GM12878 (cell line): ENCODE measurements at regions of chr15 and their contacts with region 1.

Region 1: DNA sequence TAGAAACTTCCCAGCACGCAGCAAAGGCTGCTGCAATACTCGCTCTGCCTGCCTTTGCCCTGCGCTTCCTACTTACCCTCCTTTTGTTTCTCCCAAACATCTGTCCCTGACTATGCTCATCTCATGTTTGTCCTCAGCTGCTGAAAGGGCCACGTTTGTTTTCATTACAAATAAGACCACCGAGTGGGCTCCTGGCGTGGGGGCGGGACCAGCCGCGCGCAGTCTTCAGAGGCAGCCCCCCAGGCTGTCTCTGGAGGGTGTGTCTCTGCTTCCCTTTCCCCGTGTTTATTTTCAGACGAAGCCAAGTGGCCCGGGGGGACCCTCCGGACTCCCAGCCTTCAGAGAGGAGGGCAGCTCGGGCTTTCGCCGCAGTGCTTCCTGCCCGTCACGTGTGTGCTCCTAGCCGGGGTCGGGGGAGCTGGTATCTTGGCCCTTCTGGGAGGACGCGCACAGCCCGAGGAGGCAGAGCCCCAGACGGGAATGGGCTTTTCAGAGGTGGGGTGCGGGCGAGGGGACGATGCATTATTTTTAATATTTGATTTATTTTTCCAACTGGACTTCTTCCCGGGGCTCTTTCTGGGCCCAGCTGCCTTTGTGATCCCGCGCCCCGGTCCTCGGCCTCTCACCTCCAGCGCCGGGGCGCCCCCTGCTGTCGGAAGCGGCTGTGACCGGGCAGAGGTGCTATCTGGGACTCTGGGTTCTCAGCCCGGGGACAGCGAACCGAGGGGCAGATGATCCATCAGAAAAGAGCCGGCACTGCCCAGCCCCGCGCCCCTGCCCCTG is 70.0 kb upstream of the CGNL1 start:
- DNase-seq: no peak
- ATAC-seq: peak; percentile 85
- H3K4me3 ChIP-seq: peak overlapping the region; percentile 79
- H3K27ac ChIP-seq: peak overlapping the region; percentile 52
- H3K4me1 ChIP-seq: peaks cover 14% of the 10 kb centered on the region
- H3K27me3 ChIP-seq: no peaks in the 10 kb centered on the region
- CTCF ChIP-seq: peak; percentile 80 to 91 (median 89); a peak in 5 of 6 replicates
- EP300 ChIP-seq: no peak
- POLR2A ChIP-seq: no peak
- RAD21 ChIP-seq: peak; percentile 96

Region 2: DNA sequence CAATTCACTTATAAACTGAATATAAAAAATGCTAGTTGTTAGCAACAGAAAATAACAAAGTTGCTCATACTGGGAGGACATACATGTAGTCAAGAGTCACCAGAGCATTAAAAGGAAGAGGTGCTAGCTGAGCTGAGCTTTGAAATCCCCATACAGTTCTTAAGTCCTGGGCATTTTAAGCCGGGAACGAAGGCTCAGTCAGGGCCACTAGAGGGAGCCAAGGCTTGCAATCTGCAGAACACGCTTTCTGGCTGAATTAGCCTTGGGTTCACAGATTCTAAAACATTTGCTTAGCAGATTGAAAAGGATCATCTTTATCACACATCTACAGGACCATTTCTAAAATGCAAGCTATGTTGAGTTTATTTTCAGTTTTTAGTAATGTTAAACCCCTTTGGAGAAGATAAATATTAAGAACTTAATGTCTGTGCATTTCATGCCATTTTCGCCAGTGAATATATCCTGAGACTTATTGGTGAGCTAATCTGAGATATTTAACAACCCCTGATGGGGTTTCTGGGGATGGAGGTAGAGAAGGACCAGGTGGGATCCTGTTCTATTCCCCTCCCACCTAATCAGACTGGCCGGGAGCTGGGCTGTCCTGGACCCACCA is 815.1 kb before region 1 on chr15:
- CTCF ChIA-PET with region 1: interaction called, 5 read pairs
- POLR2A ChIA-PET with region 1: no interaction called
- RAD21 ChIA-PET with region 1: interaction called, 4 read pairs
- SMC1A ChIA-PET with region 1: no interaction called
- in situ Hi-C with region 1: loop called (anchors 5 kb)
- intact Hi-C with region 1: loop called (anchors 2 kb)
- DNase-seq: peak; percentile 28
- ATAC-seq: peak; percentile 94
- H3K4me3 ChIP-seq: no peak overlapping the region
- H3K27ac ChIP-seq: no peak overlapping the region
- H3K4me1 ChIP-seq: no peaks in the 10 kb centered on the region
- H3K27me3 ChIP-seq: no peaks in the 10 kb centered on the region
- CTCF ChIP-seq: peak; percentile 89 to 94 (median 92)
- EP300 ChIP-seq: no peak
- POLR2A ChIP-seq: no peak
- RAD21 ChIP-seq: peak; percentile 86

Region 3: DNA sequence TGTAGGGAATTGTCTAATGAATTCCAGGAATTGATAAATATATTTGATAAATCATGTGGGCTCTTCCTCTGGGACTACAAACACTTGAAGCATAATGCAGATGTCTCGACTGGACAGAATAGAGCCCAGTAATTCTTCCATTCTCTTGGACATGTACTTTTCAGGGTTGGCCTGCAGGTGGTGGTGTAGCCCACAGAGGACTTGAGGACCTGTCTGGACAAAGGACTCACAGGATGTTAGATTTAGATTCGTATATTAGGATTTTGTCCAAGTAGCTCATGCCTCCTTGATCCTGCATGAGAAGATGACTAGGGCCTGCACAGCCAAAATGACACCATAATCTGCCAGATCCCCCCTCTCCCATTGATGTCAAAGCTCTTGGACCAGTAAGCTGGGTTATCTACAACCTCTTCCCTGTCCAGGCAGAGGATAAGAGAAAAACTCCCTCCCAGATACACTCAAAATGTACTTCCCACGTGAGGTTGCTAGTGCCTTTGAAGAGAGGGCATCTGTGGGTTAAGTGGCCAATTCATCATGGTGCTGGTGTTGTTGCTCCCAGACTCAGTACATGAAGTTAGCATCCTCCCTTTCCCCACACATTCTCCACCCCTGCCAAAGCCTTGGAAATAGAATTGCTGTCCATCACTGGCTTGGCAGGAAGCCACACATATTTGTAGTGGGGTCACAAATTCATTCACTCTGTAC is 484.5 kb before region 1 on chr15:
- CTCF ChIA-PET with region 1: interaction called, 10 read pairs
- POLR2A ChIA-PET with region 1: no interaction called
- RAD21 ChIA-PET with region 1: interaction called, 7 read pairs
- SMC1A ChIA-PET with region 1: interaction called, 9 read pairs
- in situ Hi-C with region 1: no loop called
- intact Hi-C with region 1: loop called (anchors 2 kb)
- DNase-seq: no peak
- ATAC-seq: peak; percentile 98
- H3K4me3 ChIP-seq: no peak overlapping the region
- H3K27ac ChIP-seq: no peak overlapping the region
- H3K4me1 ChIP-seq: no peaks in the 10 kb centered on the region
- H3K27me3 ChIP-seq: no peaks in the 10 kb centered on the region; a peak in 1 of 4 replicates
- CTCF ChIP-seq: peak; percentile 65 to 67 (median 66)
- EP300 ChIP-seq: no peak
- POLR2A ChIP-seq: no peak
- RAD21 ChIP-seq: peak; percentile 88

Region 4: GRCh38 chr15:57017024-57017423 is 289.3 kb before region 1 on chr15:
- CTCF ChIA-PET with region 1: interaction called, 5 read pairs
- POLR2A ChIA-PET with region 1: no interaction called
- RAD21 ChIA-PET with region 1: interaction called, 7 read pairs
- SMC1A ChIA-PET with region 1: interaction called, 6 read pairs
- in situ Hi-C with region 1: loop called (anchors 5 kb)
- intact Hi-C with region 1: loop called (anchors 10 kb)
- DNase-seq: no peak
- ATAC-seq: peak; percentile 67
- H3K4me3 ChIP-seq: no peak overlapping the region
- H3K27ac ChIP-seq: no peak overlapping the region
- H3K4me1 ChIP-seq: no peaks in the 10 kb centered on the region
- H3K27me3 ChIP-seq: no peaks in the 10 kb centered on the region
- CTCF ChIP-seq: peak in 2 of 3 experiments; percentile 32 to 36; a peak in 2 of 6 replicates
- EP300 ChIP-seq: no peak
- POLR2A ChIP-seq: no peak
- RAD21 ChIP-seq: peak; percentile 65

Region 5: DNA sequence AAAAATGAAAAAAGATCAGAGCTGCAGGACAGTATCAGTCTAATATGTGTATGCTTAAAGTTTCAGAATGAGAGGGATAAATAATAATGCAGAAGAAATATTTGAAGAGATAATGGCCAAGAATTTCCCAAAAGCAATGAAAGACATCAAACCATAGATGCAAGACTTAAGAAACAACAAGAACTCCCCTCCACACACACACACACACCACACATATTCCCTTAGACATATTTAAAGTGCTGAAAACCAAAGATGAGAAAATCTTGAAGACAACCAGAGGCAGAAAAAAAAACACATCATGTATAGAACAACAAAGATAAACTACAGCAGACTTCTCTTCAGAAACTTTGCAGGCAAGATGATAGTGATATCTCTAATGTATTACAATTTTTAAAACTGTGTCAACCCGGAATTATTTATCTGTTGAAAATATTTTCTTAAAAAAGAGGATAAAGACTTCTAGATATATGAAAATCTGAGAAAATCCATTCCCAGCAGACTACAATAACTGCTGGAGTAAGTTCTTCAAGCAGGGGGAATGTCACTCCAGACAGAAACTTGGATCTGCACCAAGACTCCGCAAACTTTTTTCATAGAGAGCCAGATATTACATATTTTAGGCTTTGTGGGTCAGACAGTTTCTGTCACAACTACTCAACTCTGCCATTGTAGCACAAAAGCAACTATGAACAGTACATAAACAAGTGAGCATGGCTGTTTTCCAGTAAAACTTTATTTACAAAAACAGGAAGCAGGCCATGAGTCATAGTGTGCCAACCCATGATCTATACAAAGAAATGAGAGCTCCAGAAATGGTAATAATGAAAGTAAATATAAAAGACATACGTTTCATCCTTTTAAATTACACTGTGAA is 153.4 kb before region 1 on chr15:
- CTCF ChIA-PET with region 1: interaction called, 267 read pairs
- POLR2A ChIA-PET with region 1: no interaction called
- RAD21 ChIA-PET with region 1: interaction called, 145 read pairs
- SMC1A ChIA-PET with region 1: interaction called, 176 read pairs
- in situ Hi-C with region 1: loop called (anchors 5 kb)
- intact Hi-C with region 1: no loop called
- DNase-seq: no peak
- ATAC-seq: peak; percentile 93
- H3K4me3 ChIP-seq: no peak overlapping the region
- H3K27ac ChIP-seq: no peak overlapping the region; the same call in 1 of the 2 replicates
- H3K4me1 ChIP-seq: peaks cover 6% of the 10 kb centered on the region; the same call in 1 of the 2 replicates
- H3K27me3 ChIP-seq: no peaks in the 10 kb centered on the region
- CTCF ChIP-seq: no peak
- EP300 ChIP-seq: peak; percentile 49 to 73; a peak in 1 of 4 replicates
- POLR2A ChIP-seq: no peak
- RAD21 ChIP-seq: no peak

Region 6: GRCh38 chr15:57218826-57219576 is 87.4 kb before region 1 on chr15:
- CTCF ChIA-PET with region 1: interaction called, 36 read pairs
- POLR2A ChIA-PET with region 1: no interaction called
- RAD21 ChIA-PET with region 1: interaction called, 17 read pairs
- SMC1A ChIA-PET with region 1: interaction called, 29 read pairs
- in situ Hi-C with region 1: no loop called
- intact Hi-C with region 1: loop called (anchors 5 kb)
- DNase-seq: no peak
- ATAC-seq: peak; percentile 74
- H3K4me3 ChIP-seq: no peak overlapping the region
- H3K27ac ChIP-seq: no peak overlapping the region
- H3K4me1 ChIP-seq: peaks cover 5% of the 10 kb centered on the region; the same call in 1 of the 2 replicates
- H3K27me3 ChIP-seq: no peaks in the 10 kb centered on the region
- CTCF ChIP-seq: no peak
- EP300 ChIP-seq: no peak
- POLR2A ChIP-seq: no peak
- RAD21 ChIP-seq: no peak

Region 7: GRCh38 chr15:57284535-57284934 is 21.8 kb before region 1 on chr15:
- CTCF ChIA-PET with region 1: interaction called, 13 read pairs
- POLR2A ChIA-PET with region 1: interaction called, 40 read pairs
- RAD21 ChIA-PET with region 1: interaction called, 13 read pairs
- SMC1A ChIA-PET with region 1: interaction called, 54 read pairs
- in situ Hi-C with region 1: no loop called
- intact Hi-C with region 1: loop called (anchors 2 kb)
- DNase-seq: no peak
- ATAC-seq: peak; percentile 75
- H3K4me3 ChIP-seq: peak overlapping the region; percentile 24; the same call in 1 of the 2 replicates
- H3K27ac ChIP-seq: peak overlapping the region; percentile 54
- H3K4me1 ChIP-seq: peaks cover 56% of the 10 kb centered on the region
- H3K27me3 ChIP-seq: no peaks in the 10 kb centered on the region
- CTCF ChIP-seq: no peak
- EP300 ChIP-seq: no peak
- POLR2A ChIP-seq: no peak
- RAD21 ChIP-seq: no peak

Region 8: DNA sequence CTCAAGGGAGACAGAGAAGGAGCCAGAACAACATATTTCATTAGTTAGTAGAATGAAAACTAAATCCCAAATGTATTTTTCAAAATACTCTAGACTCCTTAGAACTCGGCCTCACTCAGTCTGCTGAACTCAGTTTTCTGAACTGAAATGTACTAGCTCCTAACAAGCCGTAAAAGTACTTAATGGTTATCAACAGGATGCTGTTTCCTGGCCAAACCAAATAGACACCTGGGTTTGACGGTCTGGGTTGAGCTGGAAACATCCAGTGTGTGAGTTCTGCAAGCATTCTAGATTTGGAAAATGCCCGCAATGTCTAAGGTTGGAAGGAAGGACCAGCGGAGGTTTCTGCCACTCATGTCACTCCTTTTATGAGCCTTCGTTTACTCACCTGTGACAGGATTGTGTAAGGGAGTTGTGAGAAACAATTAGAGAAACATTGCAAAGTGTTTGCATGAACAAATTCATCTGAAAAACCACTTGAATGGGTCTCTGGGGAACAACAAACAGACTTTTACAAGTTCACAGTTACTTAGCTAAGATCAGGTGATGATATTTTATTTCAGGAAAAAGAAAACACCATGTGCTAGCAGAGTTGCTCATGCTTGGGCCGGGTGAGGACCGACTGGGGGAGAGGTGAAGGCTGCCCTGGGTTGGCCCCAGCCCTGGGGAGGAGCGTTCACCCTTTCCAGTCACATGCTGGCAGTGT is 608.2 kb after region 1 on chr15:
- CTCF ChIA-PET with region 1: no interaction called
- POLR2A ChIA-PET with region 1: no interaction called
- RAD21 ChIA-PET with region 1: no interaction called
- SMC1A ChIA-PET with region 1: no interaction called
- in situ Hi-C with region 1: no loop called
- intact Hi-C with region 1: no loop called
- DNase-seq: no peak
- ATAC-seq: no peak
- H3K4me3 ChIP-seq: no peak overlapping the region
- H3K27ac ChIP-seq: no peak overlapping the region
- H3K4me1 ChIP-seq: no peaks in the 10 kb centered on the region
- H3K27me3 ChIP-seq: no peaks in the 10 kb centered on the region; a peak in 1 of 4 replicates
- CTCF ChIP-seq: no peak
- EP300 ChIP-seq: no peak
- POLR2A ChIP-seq: no peak
- RAD21 ChIP-seq: no peak